Activated CD8-positive, alpha-beta T cell treated with anti-CD3 and anti-CD28 coated beads, Interleukin-2, amount 10 ng/mL, durations not matched to agents 7 days and 5 days (primary cell): ENCODE measurements at regions of chr20 and their contacts with region 1.

Region 1: GRCh38 chr20:34704177-34705007 is at the start of gene TP53INP2:
- DNase-seq: peak; percentile 91
- ATAC-seq: peak; percentile 57
- H3K4me3 Mint-ChIP-seq: peak within 1 kb of the TSS; percentile 85
- H3K27ac Mint-ChIP-seq: peak within 1 kb of the TSS; percentile 92
- H3K4me1 Mint-ChIP-seq: peaks cover 37% of the 10 kb centered on the region
- H3K27me3 Mint-ChIP-seq: peaks cover 15% of the 10 kb centered on the region
- total RNA-seq, gene TP53INP2: 2.0 to 2.1 TPM

Region 2: GRCh38 chr20:34452281-34452982 is 252.0 kb before region 1 on chr20:
- CTCF ChIA-PET with region 1: no interaction called
- POLR2A ChIA-PET with region 1: no interaction called
- DNase-seq: no peak
- ATAC-seq: no peak
- H3K4me3 Mint-ChIP-seq: no peak overlapping the region
- H3K27ac Mint-ChIP-seq: peak overlapping the region; percentile 22
- H3K4me1 Mint-ChIP-seq: no peaks in the 10 kb centered on the region
- H3K27me3 Mint-ChIP-seq: no peaks in the 10 kb centered on the region

Region 3: GRCh38 chr20:34516247-34517113 is 187.9 kb before region 1 on chr20 and contains the start of gene DYNLRB1:
- CTCF ChIA-PET with region 1: interaction called, 14 read pairs
- POLR2A ChIA-PET with region 1: interaction called, 4 read pairs
- DNase-seq: peak; percentile 97
- ATAC-seq: peak; percentile 88
- H3K4me3 Mint-ChIP-seq: peak within 1 kb of the TSS; percentile 98
- H3K27ac Mint-ChIP-seq: peak within 1 kb of the TSS; percentile 98
- H3K4me1 Mint-ChIP-seq: peaks cover 31% of the 10 kb centered on the region
- H3K27me3 Mint-ChIP-seq: no peaks in the 10 kb centered on the region
- total RNA-seq, gene DYNLRB1: 91.9 to 103 TPM

Region 4: DNA sequence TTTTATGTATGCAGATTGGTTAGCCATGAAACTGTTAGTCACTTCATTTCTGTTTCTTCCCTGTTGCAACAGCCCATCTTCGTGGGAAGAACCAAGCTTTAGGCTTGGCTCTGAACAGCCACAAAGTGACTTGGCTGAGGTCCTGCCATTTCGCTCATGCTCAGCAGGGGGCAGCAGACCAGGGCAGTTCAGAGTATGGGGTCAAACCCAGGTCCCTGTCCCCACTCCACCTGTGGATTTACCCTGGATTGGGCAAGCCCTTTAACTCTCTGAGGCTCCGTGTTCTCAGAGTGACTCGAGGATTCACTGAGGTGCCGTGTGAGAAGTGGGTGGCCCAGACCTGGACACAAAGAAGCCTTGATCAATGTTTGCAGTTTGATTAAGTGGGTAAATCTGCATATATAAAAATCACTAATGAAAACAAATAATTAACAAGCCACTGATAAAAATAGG is 165.7 kb before region 1 on chr20:
- CTCF ChIA-PET with region 1: interaction called, 77 read pairs
- POLR2A ChIA-PET with region 1: no interaction called
- DNase-seq: peak; percentile 66
- ATAC-seq: peak; percentile 66
- H3K4me3 Mint-ChIP-seq: no peak overlapping the region
- H3K27ac Mint-ChIP-seq: no peak overlapping the region
- H3K4me1 Mint-ChIP-seq: peaks cover 2% of the 10 kb centered on the region
- H3K27me3 Mint-ChIP-seq: no peaks in the 10 kb centered on the region

Region 5: DNA sequence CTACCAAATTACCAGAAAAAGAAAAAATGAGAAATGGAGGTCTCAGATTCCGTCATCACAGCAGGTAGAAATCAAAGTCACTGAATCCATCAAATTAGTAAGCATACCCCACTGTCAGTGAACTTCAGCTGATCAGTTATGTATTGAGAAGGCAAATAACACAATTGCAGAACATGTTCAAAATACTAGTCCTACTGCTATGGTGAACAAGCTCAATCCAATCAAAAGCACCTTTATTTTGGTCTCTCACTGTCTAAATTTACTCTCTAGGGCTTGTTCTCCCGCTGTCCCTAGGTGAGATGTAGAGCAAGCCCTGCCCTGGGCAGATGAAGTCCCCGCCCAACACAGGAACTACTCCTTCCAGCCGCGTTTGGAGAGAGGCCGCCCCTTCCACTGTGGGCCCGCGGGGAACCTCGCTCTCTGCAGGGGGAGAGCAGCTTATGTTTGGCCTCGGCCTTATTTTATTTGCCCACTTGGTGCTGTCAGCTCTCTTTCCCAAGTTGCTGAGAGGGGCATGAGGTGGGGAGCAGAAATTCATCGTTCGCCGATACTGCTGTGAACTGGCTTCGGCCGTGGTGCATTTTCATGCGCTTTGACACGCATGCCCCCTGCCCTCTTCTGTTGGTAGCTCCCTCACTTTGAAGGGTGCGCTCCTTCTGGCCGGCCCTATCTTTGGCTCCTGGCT is 160.1 kb before region 1 on chr20:
- CTCF ChIA-PET with region 1: interaction called, 77 read pairs
- POLR2A ChIA-PET with region 1: no interaction called
- DNase-seq: peak; percentile 40
- ATAC-seq: peak; percentile 83
- H3K4me3 Mint-ChIP-seq: no peak overlapping the region
- H3K27ac Mint-ChIP-seq: no peak overlapping the region
- H3K4me1 Mint-ChIP-seq: peaks cover 9% of the 10 kb centered on the region
- H3K27me3 Mint-ChIP-seq: no peaks in the 10 kb centered on the region

Region 6: DNA sequence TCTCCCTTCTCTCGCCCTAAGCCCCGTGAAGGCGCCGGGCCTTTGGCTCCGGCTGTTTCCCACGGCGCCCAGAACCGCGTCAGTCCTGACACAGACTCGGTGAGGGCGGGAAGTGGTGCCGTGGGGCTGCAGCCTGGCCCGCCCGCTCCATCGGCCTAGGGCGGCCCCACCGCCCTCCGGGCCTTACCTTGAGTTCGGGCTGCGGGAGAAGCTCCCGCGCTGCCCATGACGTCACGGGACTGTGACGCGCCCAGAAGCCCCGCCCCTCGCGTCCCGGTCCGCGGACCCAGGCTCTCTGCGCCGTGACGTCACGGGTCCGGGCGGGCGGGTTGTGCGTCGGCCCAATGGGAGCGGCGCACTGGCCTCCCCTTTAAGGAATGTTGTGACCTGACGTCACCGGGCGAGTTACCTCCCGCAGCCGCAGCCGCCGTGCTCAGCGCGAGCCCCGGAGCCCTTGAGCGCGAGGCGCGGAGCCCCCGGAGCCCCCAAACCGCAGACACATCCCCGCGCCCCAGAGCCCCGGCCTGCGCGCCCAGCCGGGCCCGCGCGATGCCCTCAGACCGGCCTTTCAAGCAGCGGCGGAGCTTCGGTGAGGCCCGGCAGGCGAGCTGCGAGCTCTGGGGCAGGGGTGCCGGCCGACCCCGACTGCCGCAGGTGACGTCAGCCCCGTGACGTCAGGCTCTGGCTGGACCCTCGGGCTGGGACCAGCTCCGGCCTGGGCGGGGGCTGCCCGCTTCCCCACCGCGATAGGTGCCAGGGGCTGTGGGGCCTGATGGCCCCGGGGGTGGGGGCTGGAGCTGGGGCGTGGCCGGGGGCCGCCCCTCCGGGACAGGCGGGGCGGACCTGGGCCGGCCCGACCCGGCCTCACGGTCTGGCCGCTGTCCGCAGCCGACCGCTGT is 145.8 kb before region 1 on chr20 and contains the start of gene MAP1LC3A:
- CTCF ChIA-PET with region 1: interaction called, 23 read pairs
- POLR2A ChIA-PET with region 1: no interaction called
- DNase-seq: peak; percentile 92
- ATAC-seq: peak; percentile 87
- H3K4me3 Mint-ChIP-seq: peak within 1 kb of the TSS; percentile 76
- H3K27ac Mint-ChIP-seq: peak within 1 kb of the TSS; percentile 84
- H3K4me1 Mint-ChIP-seq: peaks cover 13% of the 10 kb centered on the region
- H3K27me3 Mint-ChIP-seq: no peaks in the 10 kb centered on the region
- total RNA-seq, gene MAP1LC3A: 1.4 to 1.6 TPM

Region 7: GRCh38 chr20:34720266-34720665 is 15.9 kb after region 1 on chr20:
- CTCF ChIA-PET with region 1: interaction called, 18 read pairs
- POLR2A ChIA-PET with region 1: interaction called, 3 read pairs
- DNase-seq: no peak
- ATAC-seq: no peak
- H3K4me3 Mint-ChIP-seq: no peak overlapping the region
- H3K27ac Mint-ChIP-seq: no peak overlapping the region
- H3K4me1 Mint-ChIP-seq: peaks cover 11% of the 10 kb centered on the region
- H3K27me3 Mint-ChIP-seq: no peaks in the 10 kb centered on the region

Region 8: GRCh38 chr20:34815636-34816035 is 111.2 kb after region 1 on chr20:
- CTCF ChIA-PET with region 1: no interaction called
- POLR2A ChIA-PET with region 1: no interaction called
- DNase-seq: no peak
- ATAC-seq: no peak
- H3K4me3 Mint-ChIP-seq: no peak overlapping the region
- H3K27ac Mint-ChIP-seq: no peak overlapping the region
- H3K4me1 Mint-ChIP-seq: peaks cover 4% of the 10 kb centered on the region
- H3K27me3 Mint-ChIP-seq: no peaks in the 10 kb centered on the region